ENCODE measurements at regions of chr1 and their contacts with region 1.

Region 1: DNA sequence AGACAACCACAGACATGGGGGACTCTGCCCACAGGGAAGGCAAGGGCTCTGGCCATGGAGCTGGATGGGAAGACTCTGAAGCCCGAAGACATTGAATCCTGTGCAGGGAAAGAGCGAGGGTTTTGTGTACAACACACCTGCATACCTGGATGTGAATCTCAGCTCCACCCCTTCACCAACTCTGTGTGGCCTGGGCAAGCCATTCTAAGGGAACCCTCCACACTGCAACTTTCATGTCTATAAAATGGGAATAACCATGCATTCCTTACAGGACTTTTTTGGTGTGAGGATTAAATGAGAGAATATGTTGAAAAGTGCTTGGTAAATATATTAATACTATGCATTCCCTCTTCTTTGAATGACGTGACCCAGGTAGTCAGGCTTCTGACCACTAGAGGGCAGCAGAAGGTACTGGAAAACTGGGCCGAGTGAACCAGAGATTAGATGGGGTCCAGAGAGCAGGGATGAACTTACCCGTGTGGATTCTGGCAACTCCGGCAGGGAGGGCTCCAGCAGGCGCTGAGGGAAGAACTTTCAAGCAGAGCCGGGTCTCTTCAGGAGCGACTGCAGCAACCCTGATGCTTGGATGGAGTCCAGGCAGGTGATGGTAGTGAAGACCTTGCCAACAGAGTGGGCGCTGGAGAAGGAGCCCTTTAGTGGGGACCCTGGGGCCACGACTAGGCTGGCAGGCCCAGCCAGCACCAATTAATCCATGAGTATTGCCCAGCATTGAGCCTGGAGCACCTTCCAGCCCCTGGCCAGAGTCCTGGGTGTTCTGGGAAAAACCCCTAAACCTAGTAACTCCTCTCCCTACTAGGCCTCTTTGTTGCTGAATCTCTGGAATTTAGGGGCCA is 834 bp upstream of the ELF3 start:
- DNase-seq: peak; percentile 38 to 87
- H3K4me3 ChIP-seq: peak overlapping the region in 3 of 4 experiments; percentile 17 to 72 (median 30); a peak in 6 of 8 replicates
- H3K27ac ChIP-seq: peak overlapping the region; percentile 78
- H3K4me1 ChIP-seq: peaks cover 12 to 39% (median 31%) of the 10 kb centered on the region in 4 experiments
- H3K27me3 ChIP-seq: no peaks in the 10 kb centered on the region
- CTCF ChIP-seq: peak in 2 of 3 experiments; percentile 73 to 82; a peak in 3 of 4 replicates
- EP300 ChIP-seq: no peak
- POLR2A ChIP-seq: no peak
- RAD21 ChIP-seq: peak; percentile 80 to 90

Region 2: DNA sequence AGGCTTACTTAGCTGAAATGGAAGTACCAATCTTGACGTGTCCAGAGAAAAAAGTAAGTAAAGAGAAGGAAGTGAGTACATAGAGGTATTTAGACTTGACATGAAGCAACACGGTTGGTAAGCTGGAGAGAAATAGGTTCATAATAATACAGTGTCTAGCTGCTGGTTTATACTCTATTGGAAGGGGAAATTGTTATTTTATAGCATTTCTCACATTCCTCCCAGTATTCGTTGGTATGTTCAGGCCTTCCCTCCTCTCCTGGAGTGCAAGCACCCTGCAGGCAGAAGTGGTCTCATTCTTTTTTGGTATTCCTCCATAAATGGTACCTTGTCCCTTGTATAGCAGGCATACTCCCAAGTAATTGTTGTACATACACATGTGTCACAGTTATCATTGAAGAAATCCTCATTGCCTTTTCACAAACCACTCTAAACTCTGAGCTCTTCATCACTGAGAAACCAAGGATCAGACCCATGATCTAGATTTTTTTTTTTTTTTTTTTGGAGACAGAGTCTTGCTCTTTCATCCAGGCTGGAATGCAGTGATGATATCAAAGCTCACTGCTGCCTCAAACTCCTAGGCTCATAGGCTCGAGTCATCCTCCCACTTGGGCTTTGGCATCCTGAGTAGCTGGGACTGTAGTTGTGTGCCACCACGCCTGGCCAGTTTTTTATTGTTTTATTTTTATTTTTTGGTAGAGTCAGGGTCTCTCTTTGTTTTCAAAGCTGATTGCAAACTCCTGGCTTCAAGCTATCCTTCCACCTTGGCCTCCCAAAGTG is 190.4 kb before region 1 on chr1:
- CTCF ChIA-PET with region 1: no interaction called
- POLR2A ChIA-PET with region 1: no interaction called
- DNase-seq: no peak
- H3K4me3 ChIP-seq: no peak overlapping the region
- H3K27ac ChIP-seq: no peak overlapping the region
- H3K4me1 ChIP-seq: no peaks in the 10 kb centered on the region
- H3K27me3 ChIP-seq: no peaks in the 10 kb centered on the region
- CTCF ChIP-seq: no peak
- EP300 ChIP-seq: no peak
- POLR2A ChIP-seq: no peak
- RAD21 ChIP-seq: no peak

Region 3: GRCh38 chr1:201925981-201926645 is 83.4 kb before region 1 on chr1:
- CTCF ChIA-PET with region 1: no interaction called
- POLR2A ChIA-PET with region 1: no interaction called
- DNase-seq: no peak
- H3K4me3 ChIP-seq: no peak overlapping the region
- H3K27ac ChIP-seq: no peak overlapping the region
- H3K4me1 ChIP-seq: no peaks in the 10 kb centered on the region
- H3K27me3 ChIP-seq: no peaks in the 10 kb centered on the region
- CTCF ChIP-seq: no peak
- EP300 ChIP-seq: no peak
- POLR2A ChIP-seq: no peak
- RAD21 ChIP-seq: no peak

Region 4: GRCh38 chr1:202034683-202035462 is 25.3 kb after region 1 on chr1:
- CTCF ChIA-PET with region 1: interaction called, 6 read pairs
- POLR2A ChIA-PET with region 1: interaction called, 26 read pairs
- DNase-seq: peak in 1 of 2 experiments; percentile 41
- H3K4me3 ChIP-seq: no peak overlapping the region
- H3K27ac ChIP-seq: no peak overlapping the region
- H3K4me1 ChIP-seq: peaks cover 0 to 9% (median under 1%) of the 10 kb centered on the region in 4 experiments; a peak in 3 of 7 replicates
- H3K27me3 ChIP-seq: no peaks in the 10 kb centered on the region
- CTCF ChIP-seq: no peak
- EP300 ChIP-seq: no peak
- POLR2A ChIP-seq: no peak
- RAD21 ChIP-seq: no peak

Region 5: DNA sequence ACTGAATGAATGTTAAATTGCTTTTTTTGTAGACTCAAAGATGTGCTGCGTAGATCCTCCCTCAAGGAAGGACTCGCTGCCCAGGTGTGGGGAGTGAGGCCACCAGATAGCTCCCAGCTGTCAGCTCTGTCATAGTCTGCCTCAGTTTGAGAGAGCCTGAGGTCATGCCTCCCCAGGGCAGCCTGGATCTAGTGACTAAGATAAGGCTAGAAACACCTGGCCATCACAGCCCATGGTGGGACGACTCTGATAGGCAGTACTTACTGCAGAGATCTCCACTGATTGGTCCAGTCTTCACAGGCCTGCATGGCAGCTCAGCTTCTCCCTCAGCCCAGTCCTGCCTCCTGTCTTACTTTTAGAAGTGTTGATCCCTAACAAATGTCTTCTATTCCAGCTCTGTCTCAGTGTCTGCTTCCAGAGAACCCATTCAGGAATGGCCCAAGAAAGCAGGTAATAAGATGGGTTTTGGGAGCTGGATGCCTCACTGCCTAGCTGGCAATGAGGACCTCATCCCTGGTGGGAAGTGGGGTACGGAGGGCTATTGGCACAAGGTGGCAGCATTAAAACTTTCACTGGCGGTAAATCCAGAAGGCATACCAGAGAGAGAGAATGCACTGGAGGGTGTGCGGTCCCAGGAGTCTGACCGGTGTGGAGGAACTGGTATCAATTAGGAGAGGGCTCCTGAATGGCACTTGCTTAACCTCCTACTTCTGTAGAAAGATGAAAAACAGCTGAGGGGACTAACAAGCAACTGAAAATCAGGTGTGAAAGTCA is 57.8 kb after region 1 on chr1:
- CTCF ChIA-PET with region 1: interaction called, 21 read pairs
- POLR2A ChIA-PET with region 1: interaction called, 4 read pairs
- DNase-seq: no peak
- H3K4me3 ChIP-seq: no peak overlapping the region
- H3K27ac ChIP-seq: no peak overlapping the region
- H3K4me1 ChIP-seq: peaks cover 0 to 4% (median 0%) of the 10 kb centered on the region in 4 experiments; a peak in 3 of 7 replicates
- H3K27me3 ChIP-seq: no peaks in the 10 kb centered on the region
- CTCF ChIP-seq: no peak
- EP300 ChIP-seq: no peak
- POLR2A ChIP-seq: no peak
- RAD21 ChIP-seq: no peak

Region 6: GRCh38 chr1:202085682-202086404 is 76.3 kb after region 1 on chr1:
- CTCF ChIA-PET with region 1: interaction called, 13 read pairs
- POLR2A ChIA-PET with region 1: interaction called, 45 read pairs
- DNase-seq: peak in 1 of 2 experiments; percentile 56
- H3K4me3 ChIP-seq: peak overlapping the region in 1 of 4 experiments; percentile 35; a peak in 1 of 8 replicates
- H3K27ac ChIP-seq: peak overlapping the region; percentile 68; the same call in 1 of the 2 replicates
- H3K4me1 ChIP-seq: peaks cover 17 to 29% (median 20%) of the 10 kb centered on the region in 4 experiments
- H3K27me3 ChIP-seq: no peaks in the 10 kb centered on the region
- CTCF ChIP-seq: no peak
- EP300 ChIP-seq: no peak
- POLR2A ChIP-seq: no peak
- RAD21 ChIP-seq: no peak

Region 7: DNA sequence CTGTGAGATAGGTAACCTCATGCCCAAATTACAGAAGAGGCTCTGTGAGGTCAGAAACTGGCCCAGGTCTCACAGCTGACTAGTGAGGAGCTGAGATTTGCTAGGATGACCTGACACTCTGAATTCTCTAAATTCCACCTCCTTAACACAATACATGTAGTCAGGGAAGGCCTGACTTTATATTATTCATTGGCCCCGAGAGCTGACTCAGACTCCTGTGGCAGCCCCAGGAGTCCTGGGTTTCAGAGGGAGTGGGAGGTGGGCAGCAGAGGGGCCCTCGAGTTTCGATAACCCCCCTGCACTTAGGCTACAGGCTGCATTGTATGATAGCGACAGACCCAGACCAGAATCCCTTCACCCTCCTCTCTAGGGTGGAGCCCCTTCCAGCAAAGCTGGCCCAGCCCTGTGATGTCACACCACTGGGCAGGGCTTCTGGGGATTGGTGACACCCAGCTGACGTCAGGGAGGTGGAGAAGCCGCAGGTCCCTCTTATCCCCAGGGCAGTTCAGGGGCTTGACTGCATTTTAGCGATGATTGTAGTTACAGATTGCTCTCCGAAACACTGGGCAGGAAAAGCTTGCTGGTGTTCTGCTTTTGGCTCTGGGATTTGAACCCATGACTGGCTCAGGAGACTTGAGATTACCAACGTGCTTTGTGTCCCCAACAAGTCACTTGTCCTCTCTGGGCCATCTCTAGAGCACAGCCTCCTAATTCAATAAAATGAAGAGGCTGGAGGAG is 96.2 kb after region 1 on chr1:
- CTCF ChIA-PET with region 1: interaction called, 1,014 read pairs
- POLR2A ChIA-PET with region 1: interaction called, 45 read pairs
- DNase-seq: peak; percentile 58 to 90
- H3K4me3 ChIP-seq: peak overlapping the region in 1 of 4 experiments; percentile 33; a peak in 1 of 8 replicates
- H3K27ac ChIP-seq: peak overlapping the region; percentile 70; the same call in 1 of the 2 replicates
- H3K4me1 ChIP-seq: peaks cover 19 to 32% (median 20%) of the 10 kb centered on the region in 4 experiments
- H3K27me3 ChIP-seq: no peaks in the 10 kb centered on the region
- CTCF ChIP-seq: no peak
- EP300 ChIP-seq: no peak
- POLR2A ChIP-seq: no peak
- RAD21 ChIP-seq: no peak

Region 8: GRCh38 chr1:202122639-202123335 is 113.2 kb after region 1 on chr1 and contains the start of gene GPR37L1:
- CTCF ChIA-PET with region 1: interaction called, 1,014 read pairs
- POLR2A ChIA-PET with region 1: interaction called, 98 read pairs
- DNase-seq: peak; percentile 56 to 81
- H3K4me3 ChIP-seq: no peak within 1 kb of the TSS
- H3K27ac ChIP-seq: no peak within 1 kb of the TSS
- H3K4me1 ChIP-seq: peaks cover 0 to 5% (median 4%) of the 10 kb centered on the region in 4 experiments; a peak in 6 of 7 replicates
- H3K27me3 ChIP-seq: no peaks in the 10 kb centered on the region
- CTCF ChIP-seq: peak; percentile 78 to 88 (median 83)
- EP300 ChIP-seq: no peak
- POLR2A ChIP-seq: no peak
- RAD21 ChIP-seq: peak; percentile 52 to 68
- total RNA-seq, gene GPR37L1: 0.08 and 0.13 TPM in 2 replicates

Measured in H1 (cell line).